CD4-positive, alpha-beta T cell (primary cell): ENCODE measurements at regions of chr6 and their contacts with region 1.

Region 1: GRCh38 chr6:142885182-142885867 is 59.7 kb downstream of the HIVEP2 start:
- DNase-seq: peak in 10 of 14 experiments; percentile 17 to 93 (median 48)
- ATAC-seq: peak; percentile 85
- H3K4me3 ChIP-seq: peak overlapping the region; percentile 45
- H3K4me3 Mint-ChIP-seq: peak overlapping the region; percentile 95
- H3K27ac ChIP-seq: peak overlapping the region; percentile 75 to 81
- H3K27ac Mint-ChIP-seq: peak overlapping the region; percentile 91
- H3K4me1 ChIP-seq: peaks cover 43% of the 10 kb centered on the region
- H3K4me1 Mint-ChIP-seq: peaks cover 93% of the 10 kb centered on the region
- H3K27me3 ChIP-seq: no peaks in the 10 kb centered on the region
- H3K27me3 Mint-ChIP-seq: no peaks in the 10 kb centered on the region
- CTCF ChIP-seq: no peak

Region 2: GRCh38 chr6:142692942-142693341 is 192.4 kb before region 1 on chr6:
- CTCF ChIA-PET with region 1: no interaction called
- POLR2A ChIA-PET with region 1: no interaction called
- intact Hi-C with region 1: loop called (anchors 2 kb)
- DNase-seq: peak; percentile 43 to 82 (median 62)
- ATAC-seq: peak; percentile 89
- H3K4me3 ChIP-seq: no peak overlapping the region
- H3K4me3 Mint-ChIP-seq: no peak overlapping the region
- H3K27ac ChIP-seq: no peak overlapping the region
- H3K27ac Mint-ChIP-seq: no peak overlapping the region
- H3K4me1 ChIP-seq: peaks cover 8% of the 10 kb centered on the region
- H3K4me1 Mint-ChIP-seq: peaks cover 21% of the 10 kb centered on the region
- H3K27me3 ChIP-seq: no peaks in the 10 kb centered on the region
- H3K27me3 Mint-ChIP-seq: no peaks in the 10 kb centered on the region
- CTCF ChIP-seq: peak; percentile 96

Region 3: GRCh38 chr6:142802124-142802523 is 83.2 kb before region 1 on chr6:
- CTCF ChIA-PET with region 1: no interaction called
- POLR2A ChIA-PET with region 1: no interaction called
- intact Hi-C with region 1: no loop called
- DNase-seq: peak in 3 of 14 experiments; percentile 28 to 41 (median 35)
- ATAC-seq: peak; percentile 44
- H3K4me3 ChIP-seq: no peak overlapping the region
- H3K4me3 Mint-ChIP-seq: no peak overlapping the region
- H3K27ac ChIP-seq: no peak overlapping the region
- H3K27ac Mint-ChIP-seq: peak overlapping the region; percentile 40
- H3K4me1 ChIP-seq: peaks cover 23% of the 10 kb centered on the region
- H3K4me1 Mint-ChIP-seq: peaks cover 98% of the 10 kb centered on the region
- H3K27me3 ChIP-seq: no peaks in the 10 kb centered on the region
- H3K27me3 Mint-ChIP-seq: no peaks in the 10 kb centered on the region
- CTCF ChIP-seq: no peak

Region 4: DNA sequence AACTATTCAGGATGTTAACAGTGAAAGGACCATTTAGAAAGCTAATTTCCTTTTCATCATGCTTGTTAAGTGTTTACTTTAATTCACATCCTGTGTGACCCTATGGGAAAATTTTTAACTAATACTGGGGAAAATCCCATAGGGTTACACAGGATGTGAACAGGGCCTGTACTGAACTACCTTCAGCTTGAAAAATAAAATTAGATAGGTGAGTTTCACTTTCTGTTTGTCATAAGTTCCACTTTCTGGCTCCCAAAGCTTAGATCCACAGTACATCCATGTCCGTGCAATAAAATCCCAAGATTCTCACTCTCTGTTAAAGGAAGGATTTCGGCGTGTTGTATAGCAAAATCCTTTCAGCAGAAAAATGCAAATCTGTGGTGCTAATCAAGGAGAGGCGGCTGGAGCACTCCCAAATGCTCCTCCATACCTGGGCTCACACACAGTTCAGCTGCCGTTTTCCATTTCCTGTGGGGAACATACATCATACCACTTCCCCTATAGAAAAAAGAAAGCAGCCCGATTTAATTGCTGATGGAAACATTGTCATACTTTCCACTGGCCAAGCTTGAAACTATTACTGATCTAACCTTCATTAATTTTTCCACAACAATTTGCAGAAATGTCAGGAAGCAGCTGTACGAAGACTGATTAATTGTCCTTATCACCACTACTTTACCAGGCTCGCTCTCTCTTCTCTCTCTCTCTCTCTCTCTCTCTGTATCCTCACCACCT is 65.6 kb before region 1 on chr6:
- CTCF ChIA-PET with region 1: no interaction called
- POLR2A ChIA-PET with region 1: interaction called, 14 read pairs
- intact Hi-C with region 1: loop called in 1 of 2 experiments (anchors 2 kb)
- DNase-seq: peak in 5 of 14 experiments; percentile 13 to 84 (median 75)
- ATAC-seq: peak; percentile 51
- H3K4me3 ChIP-seq: peak overlapping the region; percentile 45
- H3K4me3 Mint-ChIP-seq: peak overlapping the region; percentile 84
- H3K27ac ChIP-seq: peak overlapping the region; percentile 75 to 84
- H3K27ac Mint-ChIP-seq: peak overlapping the region; percentile 82
- H3K4me1 ChIP-seq: peaks cover 52% of the 10 kb centered on the region
- H3K4me1 Mint-ChIP-seq: peaks cover 82% of the 10 kb centered on the region
- H3K27me3 ChIP-seq: no peaks in the 10 kb centered on the region
- H3K27me3 Mint-ChIP-seq: no peaks in the 10 kb centered on the region
- CTCF ChIP-seq: no peak

Region 5: GRCh38 chr6:142850679-142851423 is 34.5 kb before region 1 on chr6:
- CTCF ChIA-PET with region 1: interaction called, 4 read pairs
- POLR2A ChIA-PET with region 1: interaction called, 137 read pairs
- intact Hi-C with region 1: loop called (anchors 1 to 2 kb)
- DNase-seq: peak in 6 of 14 experiments; percentile 30 to 73 (median 63)
- ATAC-seq: peak; percentile 33
- H3K4me3 ChIP-seq: peak overlapping the region; percentile 2
- H3K4me3 Mint-ChIP-seq: peak overlapping the region; percentile 84
- H3K27ac ChIP-seq: peak overlapping the region; percentile 10 to 43
- H3K27ac Mint-ChIP-seq: peak overlapping the region; percentile 94
- H3K4me1 ChIP-seq: peaks cover 64% of the 10 kb centered on the region
- H3K4me1 Mint-ChIP-seq: peaks cover 96% of the 10 kb centered on the region
- H3K27me3 ChIP-seq: no peaks in the 10 kb centered on the region
- H3K27me3 Mint-ChIP-seq: no peaks in the 10 kb centered on the region
- CTCF ChIP-seq: no peak

Region 6: DNA sequence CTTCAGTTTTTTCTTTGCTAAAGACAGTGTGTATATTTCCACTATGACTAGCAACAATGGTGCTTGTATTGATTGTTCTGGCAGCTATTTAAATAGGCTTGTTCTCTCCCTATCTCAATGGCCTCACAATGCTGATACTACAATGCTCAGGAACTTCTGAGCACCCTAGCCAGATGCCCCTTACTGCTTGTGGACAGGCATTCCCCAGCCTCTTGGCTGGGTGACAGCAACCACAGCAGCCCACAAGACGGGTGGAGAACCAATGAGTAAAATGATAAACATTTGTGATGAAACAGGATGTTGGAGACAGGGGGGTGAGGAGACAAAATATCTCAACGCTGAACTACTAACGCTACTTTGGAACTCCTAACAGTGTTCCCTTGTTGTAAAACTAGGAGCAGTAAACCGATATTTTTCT is 17.3 kb after region 1 on chr6:
- CTCF ChIA-PET with region 1: interaction called, 5 read pairs
- POLR2A ChIA-PET with region 1: interaction called, 74 read pairs
- intact Hi-C with region 1: loop called in 1 of 2 experiments (anchors 1 kb)
- DNase-seq: peak; percentile 55 to 95 (median 70)
- ATAC-seq: peak; percentile 57
- H3K4me3 ChIP-seq: peak overlapping the region; percentile 62
- H3K4me3 Mint-ChIP-seq: peak overlapping the region; percentile 81
- H3K27ac ChIP-seq: peak overlapping the region; percentile 86 to 93
- H3K27ac Mint-ChIP-seq: no peak overlapping the region
- H3K4me1 ChIP-seq: peaks cover 40% of the 10 kb centered on the region
- H3K4me1 Mint-ChIP-seq: peaks cover 26% of the 10 kb centered on the region
- H3K27me3 ChIP-seq: no peaks in the 10 kb centered on the region
- H3K27me3 Mint-ChIP-seq: no peaks in the 10 kb centered on the region
- CTCF ChIP-seq: no peak

Region 7: GRCh38 chr6:142946181-142946923 is 61.0 kb after region 1 on chr6:
- CTCF ChIA-PET with region 1: interaction called, 3 read pairs
- POLR2A ChIA-PET with region 1: interaction called, 13 read pairs
- intact Hi-C with region 1: loop called (anchors 1 to 5 kb)
- DNase-seq: peak; percentile 75 to 99 (median 90)
- ATAC-seq: peak; percentile 46
- H3K4me3 ChIP-seq: peak overlapping the region; percentile 94
- H3K4me3 Mint-ChIP-seq: peak overlapping the region; percentile 96
- H3K27ac ChIP-seq: peak overlapping the region; percentile 98 to 100
- H3K27ac Mint-ChIP-seq: peak overlapping the region; percentile 98
- H3K4me1 ChIP-seq: peaks cover 14% of the 10 kb centered on the region
- H3K4me1 Mint-ChIP-seq: peaks cover 42% of the 10 kb centered on the region
- H3K27me3 ChIP-seq: no peaks in the 10 kb centered on the region
- H3K27me3 Mint-ChIP-seq: peaks cover 5% of the 10 kb centered on the region
- CTCF ChIP-seq: no peak